CD8-positive, alpha-beta T cell (primary cell): ENCODE measurements at regions of chr10 and their contacts with region 1.

Region 1: DNA sequence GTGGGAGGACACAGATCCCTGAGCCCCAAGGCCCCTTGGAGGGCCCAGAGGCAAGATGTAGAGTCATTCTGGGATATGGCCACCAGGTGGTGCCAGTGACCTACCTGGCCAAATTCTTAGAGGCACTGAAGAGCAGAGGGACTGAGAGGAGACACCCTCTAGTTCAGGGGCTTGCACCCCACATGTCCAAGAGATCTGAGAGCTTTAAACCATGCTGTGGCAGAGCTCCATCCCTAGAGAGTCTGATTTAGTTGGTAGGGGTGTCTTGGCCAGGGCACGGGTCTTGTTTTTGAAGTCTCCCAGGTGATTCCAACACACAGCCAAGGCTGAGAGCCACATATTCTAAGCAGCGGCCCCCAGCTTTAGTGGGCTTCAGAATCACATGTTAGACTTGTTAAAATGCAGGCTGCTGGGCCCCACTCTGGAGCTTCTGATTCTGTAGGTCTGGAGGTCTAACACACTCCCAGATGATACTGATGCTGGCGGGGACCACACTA is 52.5 kb downstream of the PRF1 start:
- DNase-seq: peak; percentile 62 to 89 (median 80)
- ATAC-seq: peak; percentile 97
- H3K4me3 ChIP-seq: no peak overlapping the region
- H3K4me3 Mint-ChIP-seq: no peak overlapping the region
- H3K27ac ChIP-seq: no peak overlapping the region
- H3K27ac Mint-ChIP-seq: no peak overlapping the region
- H3K4me1 ChIP-seq: no peaks in the 10 kb centered on the region
- H3K4me1 Mint-ChIP-seq: peaks cover 1% of the 10 kb centered on the region
- H3K27me3 ChIP-seq: no peaks in the 10 kb centered on the region
- H3K27me3 Mint-ChIP-seq: no peaks in the 10 kb centered on the region
- CTCF ChIP-seq: peak; percentile 89

Region 2: DNA sequence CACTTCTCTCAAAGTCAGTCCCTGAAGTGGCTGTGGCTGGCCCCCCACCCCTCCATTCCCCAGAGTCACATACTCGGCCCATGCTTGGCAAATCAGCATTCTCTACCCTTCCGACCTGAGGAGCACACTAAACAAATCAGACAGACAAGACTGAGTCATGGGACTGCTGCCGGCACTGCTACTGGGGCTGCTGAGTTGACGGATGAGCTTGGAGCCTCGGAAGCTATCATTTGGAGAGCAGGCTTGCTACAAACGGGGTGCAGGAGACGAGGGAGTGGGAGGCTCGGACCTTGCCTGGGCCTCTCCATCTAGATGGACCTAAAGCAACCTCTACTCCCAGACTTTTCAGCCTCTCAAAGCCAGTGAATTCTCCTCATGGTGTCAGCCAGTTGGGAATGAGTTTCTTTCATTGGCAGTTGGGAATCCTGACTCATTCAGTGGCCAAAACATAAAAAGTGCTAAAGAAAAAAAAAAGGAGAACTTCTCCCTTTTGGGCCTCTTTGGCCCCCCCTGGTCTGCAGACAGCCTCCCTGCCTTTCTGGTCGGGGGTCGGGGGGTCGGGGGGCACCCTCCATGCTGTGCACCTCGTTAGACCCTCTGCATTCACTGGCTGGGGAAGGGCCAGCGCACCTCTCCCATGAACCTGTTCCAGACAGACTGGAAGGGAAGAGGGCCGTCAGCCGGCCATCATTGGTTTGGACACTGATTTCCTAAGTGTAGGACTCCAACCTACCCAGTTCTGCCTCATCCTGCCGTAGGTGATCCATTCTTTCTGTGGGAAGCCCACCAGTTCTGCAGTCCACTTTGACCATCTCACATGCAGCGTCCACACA is 800.6 kb before region 1 on chr10:
- CTCF ChIA-PET with region 1: no interaction called
- POLR2A ChIA-PET with region 1: no interaction called
- intact Hi-C with region 1: no loop called
- DNase-seq: no peak
- ATAC-seq: no peak
- H3K4me3 ChIP-seq: no peak overlapping the region
- H3K4me3 Mint-ChIP-seq: no peak overlapping the region
- H3K27ac ChIP-seq: no peak overlapping the region
- H3K27ac Mint-ChIP-seq: no peak overlapping the region
- H3K4me1 ChIP-seq: no peaks in the 10 kb centered on the region
- H3K4me1 Mint-ChIP-seq: no peaks in the 10 kb centered on the region
- H3K27me3 ChIP-seq: no peaks in the 10 kb centered on the region
- H3K27me3 Mint-ChIP-seq: peaks cover 30% of the 10 kb centered on the region
- CTCF ChIP-seq: no peak

Region 3: GRCh38 chr10:70461215-70461986 is 88.6 kb before region 1 on chr10:
- CTCF ChIA-PET with region 1: interaction called, 38 read pairs
- POLR2A ChIA-PET with region 1: no interaction called
- intact Hi-C with region 1: loop called in 1 of 2 experiments (anchors 2 kb)
- DNase-seq: peak in 8 of 9 experiments; percentile 30 to 67 (median 47)
- ATAC-seq: peak; percentile 70
- H3K4me3 ChIP-seq: no peak overlapping the region
- H3K4me3 Mint-ChIP-seq: no peak overlapping the region
- H3K27ac ChIP-seq: no peak overlapping the region
- H3K27ac Mint-ChIP-seq: no peak overlapping the region
- H3K4me1 ChIP-seq: peaks cover 11% of the 10 kb centered on the region
- H3K4me1 Mint-ChIP-seq: peaks cover 4% of the 10 kb centered on the region
- H3K27me3 ChIP-seq: peaks cover 3 to 15% of the 10 kb centered on the region in 2 experiments
- H3K27me3 Mint-ChIP-seq: peaks cover 37% of the 10 kb centered on the region
- CTCF ChIP-seq: peak; percentile 76

Region 4: GRCh38 chr10:70732569-70732968 is 182.6 kb after region 1 on chr10:
- CTCF ChIA-PET with region 1: interaction called, 11 read pairs
- POLR2A ChIA-PET with region 1: no interaction called
- intact Hi-C with region 1: no loop called
- DNase-seq: no peak
- ATAC-seq: no peak
- H3K4me3 ChIP-seq: no peak overlapping the region
- H3K4me3 Mint-ChIP-seq: no peak overlapping the region
- H3K27ac ChIP-seq: no peak overlapping the region
- H3K27ac Mint-ChIP-seq: no peak overlapping the region
- H3K4me1 ChIP-seq: no peaks in the 10 kb centered on the region
- H3K4me1 Mint-ChIP-seq: no peaks in the 10 kb centered on the region
- H3K27me3 ChIP-seq: no peaks in the 10 kb centered on the region
- H3K27me3 Mint-ChIP-seq: no peaks in the 10 kb centered on the region
- CTCF ChIP-seq: no peak

Region 5: GRCh38 chr10:70769121-70769520 is 219.1 kb after region 1 on chr10:
- CTCF ChIA-PET with region 1: interaction called, 215 read pairs
- POLR2A ChIA-PET with region 1: no interaction called
- intact Hi-C with region 1: no loop called
- DNase-seq: no peak
- ATAC-seq: no peak
- H3K4me3 ChIP-seq: no peak overlapping the region
- H3K4me3 Mint-ChIP-seq: no peak overlapping the region
- H3K27ac ChIP-seq: no peak overlapping the region
- H3K27ac Mint-ChIP-seq: no peak overlapping the region
- H3K4me1 ChIP-seq: no peaks in the 10 kb centered on the region
- H3K4me1 Mint-ChIP-seq: no peaks in the 10 kb centered on the region
- H3K27me3 ChIP-seq: no peaks in the 10 kb centered on the region
- H3K27me3 Mint-ChIP-seq: no peaks in the 10 kb centered on the region
- CTCF ChIP-seq: no peak

Region 6: DNA sequence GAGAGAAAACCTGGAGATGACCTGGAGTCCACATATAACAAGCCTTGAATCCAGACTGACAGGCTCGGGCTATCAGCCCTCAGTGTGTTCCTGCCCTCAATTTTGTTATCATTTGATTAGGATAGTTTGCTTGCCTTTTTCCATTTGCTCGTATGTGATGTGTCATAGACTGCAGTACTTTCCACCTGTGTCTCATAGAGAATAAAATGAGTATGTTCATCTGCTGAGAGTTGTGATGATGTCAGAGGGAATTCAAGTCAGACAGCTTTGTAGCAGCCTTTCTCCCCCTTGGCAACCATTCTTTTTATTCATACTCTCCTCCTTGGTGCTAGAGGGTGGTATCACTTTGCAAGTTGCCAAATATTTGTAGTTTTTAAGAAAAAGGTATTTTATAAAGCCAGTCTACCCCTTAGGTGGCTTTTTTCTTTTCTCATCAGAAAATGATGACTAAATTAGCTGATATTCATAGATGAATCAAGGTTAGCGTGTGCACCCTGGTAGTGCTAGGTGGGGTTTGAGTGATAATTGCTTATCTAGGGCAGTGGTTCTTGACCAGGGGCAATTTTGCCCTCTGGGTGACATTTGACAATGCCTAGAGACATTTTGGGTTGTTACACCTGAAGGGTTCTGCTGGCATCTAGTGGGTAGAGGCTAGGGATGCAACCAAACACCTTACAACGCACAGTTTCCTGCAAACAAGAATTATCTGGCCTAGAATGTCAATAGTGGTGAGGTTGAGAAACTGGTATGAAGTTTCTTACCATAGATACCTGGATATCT is 271.2 kb after region 1 on chr10:
- CTCF ChIA-PET with region 1: interaction called, 7 read pairs
- POLR2A ChIA-PET with region 1: no interaction called
- intact Hi-C with region 1: loop called (anchors 1 to 2 kb)
- DNase-seq: peak in 2 of 9 experiments; percentile 33 to 43
- ATAC-seq: peak; percentile 42
- H3K4me3 ChIP-seq: no peak overlapping the region
- H3K4me3 Mint-ChIP-seq: no peak overlapping the region
- H3K27ac ChIP-seq: no peak overlapping the region
- H3K27ac Mint-ChIP-seq: no peak overlapping the region
- H3K4me1 ChIP-seq: peaks cover 8% of the 10 kb centered on the region
- H3K4me1 Mint-ChIP-seq: peaks cover 28% of the 10 kb centered on the region
- H3K27me3 ChIP-seq: no peaks in the 10 kb centered on the region
- H3K27me3 Mint-ChIP-seq: no peaks in the 10 kb centered on the region
- CTCF ChIP-seq: no peak

Region 7: DNA sequence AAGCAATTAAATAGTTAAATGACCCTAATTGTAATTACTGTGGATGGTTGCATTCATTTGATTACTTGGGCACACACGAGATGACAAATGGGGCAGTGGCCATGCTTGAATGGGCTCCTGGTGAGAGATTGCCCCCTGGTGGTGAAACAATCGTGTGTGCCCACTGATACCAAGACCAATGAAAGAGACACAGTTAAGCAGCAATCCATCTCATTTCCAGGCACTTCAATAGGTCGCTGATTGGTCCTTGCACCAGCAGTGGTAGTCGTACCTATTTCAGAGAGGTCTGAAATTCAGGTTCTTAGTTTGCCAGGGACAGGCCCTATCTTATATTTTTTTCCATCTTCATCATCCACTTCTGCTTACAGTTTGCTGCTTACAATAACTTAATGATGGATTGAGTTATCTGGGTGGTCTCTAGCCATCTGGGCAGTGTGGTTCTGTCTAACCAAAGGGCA is 330.1 kb after region 1 on chr10:
- CTCF ChIA-PET with region 1: interaction called, 65 read pairs
- POLR2A ChIA-PET with region 1: no interaction called
- intact Hi-C with region 1: loop called (anchors 1 kb)
- DNase-seq: peak; percentile 45 to 87 (median 76)
- ATAC-seq: peak; percentile 92
- H3K4me3 ChIP-seq: no peak overlapping the region
- H3K4me3 Mint-ChIP-seq: no peak overlapping the region
- H3K27ac ChIP-seq: no peak overlapping the region
- H3K27ac Mint-ChIP-seq: no peak overlapping the region
- H3K4me1 ChIP-seq: no peaks in the 10 kb centered on the region
- H3K4me1 Mint-ChIP-seq: peaks cover 2% of the 10 kb centered on the region
- H3K27me3 ChIP-seq: no peaks in the 10 kb centered on the region
- H3K27me3 Mint-ChIP-seq: no peaks in the 10 kb centered on the region
- CTCF ChIP-seq: peak; percentile 84

Region 8: DNA sequence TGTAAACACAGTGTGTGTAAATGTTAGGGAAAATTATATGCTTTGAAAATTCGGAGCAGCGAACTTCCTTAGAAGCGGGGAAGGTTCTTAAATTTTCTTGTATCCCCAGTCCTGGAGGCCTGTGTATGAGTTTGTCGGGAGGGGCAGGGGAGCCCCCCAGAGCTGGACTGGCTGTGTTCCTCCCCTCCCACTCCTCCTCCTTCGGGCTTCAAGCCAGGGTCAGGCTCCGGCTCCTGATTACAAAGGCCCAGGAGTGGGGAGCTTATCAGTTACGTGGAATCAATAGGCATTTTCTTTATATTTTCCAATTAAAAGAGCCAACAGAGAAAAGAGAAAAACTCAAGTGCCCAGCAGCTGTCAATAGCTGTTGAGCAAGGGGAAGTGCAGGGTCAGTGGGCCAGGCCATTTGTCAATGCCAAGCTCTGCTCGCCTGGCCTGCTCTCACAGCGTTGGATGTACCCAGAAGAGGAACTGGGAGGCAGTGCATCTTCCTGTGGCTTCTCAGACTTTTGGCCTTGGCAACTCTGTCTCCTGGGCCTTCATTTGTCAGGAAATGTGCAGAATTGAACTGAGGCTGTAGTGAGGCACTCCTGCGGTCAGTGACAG is 495.3 kb after region 1 on chr10:
- CTCF ChIA-PET with region 1: no interaction called
- POLR2A ChIA-PET with region 1: no interaction called
- intact Hi-C with region 1: no loop called
- DNase-seq: no peak
- ATAC-seq: no peak
- H3K4me3 ChIP-seq: no peak overlapping the region
- H3K4me3 Mint-ChIP-seq: no peak overlapping the region
- H3K27ac ChIP-seq: no peak overlapping the region
- H3K27ac Mint-ChIP-seq: no peak overlapping the region
- H3K4me1 ChIP-seq: no peaks in the 10 kb centered on the region
- H3K4me1 Mint-ChIP-seq: no peaks in the 10 kb centered on the region
- H3K27me3 ChIP-seq: no peaks in the 10 kb centered on the region
- H3K27me3 Mint-ChIP-seq: peaks cover 3% of the 10 kb centered on the region
- CTCF ChIP-seq: no peak

Region 9: GRCh38 chr10:71285180-71285545 is 735.2 kb after region 1 on chr10:
- CTCF ChIA-PET with region 1: no interaction called
- POLR2A ChIA-PET with region 1: no interaction called
- intact Hi-C with region 1: loop called in 1 of 2 experiments (anchors 2 kb)
- DNase-seq: peak in 5 of 9 experiments; percentile 7 to 47 (median 25)
- ATAC-seq: peak; percentile 48
- H3K4me3 ChIP-seq: no peak overlapping the region
- H3K4me3 Mint-ChIP-seq: no peak overlapping the region
- H3K27ac ChIP-seq: no peak overlapping the region
- H3K27ac Mint-ChIP-seq: no peak overlapping the region
- H3K4me1 ChIP-seq: no peaks in the 10 kb centered on the region
- H3K4me1 Mint-ChIP-seq: no peaks in the 10 kb centered on the region
- H3K27me3 ChIP-seq: no peaks in the 10 kb centered on the region
- H3K27me3 Mint-ChIP-seq: no peaks in the 10 kb centered on the region
- CTCF ChIP-seq: peak; percentile 53